Posterior vena cava (tissue), 2 donors: ENCODE measurements at regions of chr18 and their contacts with region 1.

Region 1: GRCh38 chr18:66495844-66496243 is 108.0 kb downstream of the CDH19 start:
- DNase-seq: no peak

Region 2: GRCh38 chr18:66621816-66622576 is 126.2 kb after region 1 on chr18:
- intact Hi-C with region 1: no loop called
- DNase-seq: no peak

Region 3: DNA sequence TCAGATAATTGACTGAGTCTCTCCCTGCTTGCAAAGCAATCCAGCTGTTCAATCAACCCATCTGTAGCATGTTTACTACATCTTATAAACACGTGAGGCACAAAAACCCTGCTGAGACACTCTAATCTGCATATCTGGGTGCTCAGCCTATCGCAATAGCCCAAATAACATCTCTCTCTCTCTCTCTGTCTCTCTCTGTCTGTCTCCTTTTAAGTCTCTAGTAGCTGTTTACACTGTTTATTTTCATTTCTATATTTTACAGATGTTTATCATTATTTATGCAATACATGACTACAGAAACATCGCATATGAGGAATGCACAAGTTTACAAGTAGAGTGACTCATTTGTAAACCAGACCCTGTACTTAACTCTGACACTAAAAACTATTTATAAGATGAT is 1442.8 kb after region 1 on chr18:
- intact Hi-C with region 1: loop called in 1 of 2 experiments (anchors 5 kb)
- DNase-seq: no peak